Activated CD8-positive, alpha-beta memory T cell treated with anti-CD3 and anti-CD28 coated beads, Interleukin-2, amount 10 ng/mL, durations not matched to agents 7 days and 5 days (primary cell): ENCODE measurements at regions of chr17 and their contacts with region 1.

Region 1: DNA sequence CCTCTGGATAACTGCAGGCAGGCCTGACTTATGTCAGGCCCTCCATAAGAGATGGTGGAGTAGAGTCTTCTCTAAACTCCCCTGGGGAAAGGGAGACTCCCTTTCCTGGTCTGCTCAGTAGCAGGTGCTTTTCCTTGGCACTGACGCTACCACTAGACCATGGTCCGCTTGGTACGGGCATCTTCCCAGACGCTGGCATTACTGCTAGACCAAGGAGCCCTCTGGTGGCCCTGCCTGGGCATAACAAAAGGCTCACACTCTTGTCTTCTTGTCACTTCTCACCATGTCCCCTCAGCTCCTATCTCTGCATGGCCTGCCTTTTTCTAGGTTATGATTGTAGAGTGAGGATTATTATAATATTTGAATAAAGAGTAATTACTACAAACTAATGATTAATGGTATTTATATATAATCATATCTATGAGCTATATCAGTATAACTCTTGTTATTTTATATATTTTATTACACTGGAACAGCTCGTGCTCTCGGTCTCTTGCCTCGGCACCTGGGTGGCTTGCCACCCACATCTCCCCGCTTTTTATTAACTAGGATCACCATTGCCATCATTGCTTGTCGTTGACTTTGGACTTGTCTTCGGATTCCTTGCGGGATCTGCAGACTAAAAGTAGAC is 59.8 kb upstream of the ARL4D start:
- DNase-seq: peak; percentile 73
- ATAC-seq: no peak
- H3K4me3 Mint-ChIP-seq: no peak overlapping the region
- H3K27ac Mint-ChIP-seq: no peak overlapping the region
- H3K4me1 Mint-ChIP-seq: peaks cover 14% of the 10 kb centered on the region
- H3K27me3 Mint-ChIP-seq: no peaks in the 10 kb centered on the region

Region 2: DNA sequence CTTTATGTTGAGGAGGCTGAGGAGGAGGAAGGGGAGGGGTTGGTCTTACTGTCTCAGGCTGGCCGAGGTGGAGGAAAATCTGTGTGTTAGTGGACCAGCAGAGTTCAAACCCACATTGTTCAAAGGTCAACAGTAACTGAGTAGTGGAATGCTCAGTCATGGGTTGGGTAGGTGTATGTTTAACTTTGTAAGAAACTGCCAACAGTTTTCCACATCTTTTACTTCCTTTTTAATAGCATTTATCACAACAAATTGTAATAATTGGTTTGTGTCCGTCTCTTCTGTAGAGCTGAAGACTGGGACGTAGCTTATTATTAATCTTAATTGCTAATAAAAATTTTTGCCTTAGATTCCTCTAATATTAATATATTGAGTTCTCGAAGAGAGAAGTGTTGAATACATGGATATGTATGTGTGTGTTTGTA is 875.0 kb before region 1 on chr17:
- CTCF ChIA-PET with region 1: no interaction called
- DNase-seq: no peak
- ATAC-seq: no peak
- H3K4me3 Mint-ChIP-seq: no peak overlapping the region
- H3K27ac Mint-ChIP-seq: no peak overlapping the region
- H3K4me1 Mint-ChIP-seq: peaks cover 18% of the 10 kb centered on the region
- H3K27me3 Mint-ChIP-seq: peaks cover 21% of the 10 kb centered on the region

Region 3: GRCh38 chr17:43042025-43042628 is 296.9 kb before region 1 on chr17:
- CTCF ChIA-PET with region 1: no interaction called
- DNase-seq: no peak
- ATAC-seq: no peak
- H3K4me3 Mint-ChIP-seq: no peak overlapping the region
- H3K27ac Mint-ChIP-seq: no peak overlapping the region
- H3K4me1 Mint-ChIP-seq: no peaks in the 10 kb centered on the region
- H3K27me3 Mint-ChIP-seq: no peaks in the 10 kb centered on the region

Region 4: DNA sequence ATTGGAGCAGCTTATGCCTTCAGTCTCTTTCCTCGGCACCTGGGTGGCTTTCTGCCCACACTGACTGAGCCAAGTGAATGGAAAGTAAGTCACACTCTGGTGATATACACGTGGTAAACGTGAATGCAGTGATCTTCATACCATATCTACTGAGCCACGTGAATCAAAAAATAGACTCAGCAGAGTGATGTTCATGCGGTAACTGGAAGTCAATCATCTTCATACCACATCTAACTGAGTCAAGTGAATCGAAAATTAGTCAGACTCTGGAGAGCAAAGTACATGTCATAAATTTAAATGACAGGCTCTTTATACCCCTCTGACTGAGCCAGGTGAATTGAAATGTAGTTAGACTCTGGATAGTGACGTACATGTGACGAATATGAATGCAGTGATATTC is 12.7 kb after region 1 on chr17:
- CTCF ChIA-PET with region 1: interaction called, 20 read pairs
- DNase-seq: no peak
- ATAC-seq: peak; percentile 47
- H3K4me3 Mint-ChIP-seq: no peak overlapping the region
- H3K27ac Mint-ChIP-seq: no peak overlapping the region
- H3K4me1 Mint-ChIP-seq: peaks cover 13% of the 10 kb centered on the region
- H3K27me3 Mint-ChIP-seq: no peaks in the 10 kb centered on the region

Region 5: GRCh38 chr17:43360739-43361505 is 21.9 kb after region 1 on chr17:
- CTCF ChIA-PET with region 1: interaction called, 20 read pairs
- DNase-seq: peak; percentile 97
- ATAC-seq: peak; percentile 82
- H3K4me3 Mint-ChIP-seq: peak overlapping the region; percentile 88
- H3K27ac Mint-ChIP-seq: peak overlapping the region; percentile 99
- H3K4me1 Mint-ChIP-seq: peaks cover 32% of the 10 kb centered on the region
- H3K27me3 Mint-ChIP-seq: no peaks in the 10 kb centered on the region